Panc1 (cell line): ENCODE measurements at regions of chr19 and their contacts with region 1.

Region 1: DNA sequence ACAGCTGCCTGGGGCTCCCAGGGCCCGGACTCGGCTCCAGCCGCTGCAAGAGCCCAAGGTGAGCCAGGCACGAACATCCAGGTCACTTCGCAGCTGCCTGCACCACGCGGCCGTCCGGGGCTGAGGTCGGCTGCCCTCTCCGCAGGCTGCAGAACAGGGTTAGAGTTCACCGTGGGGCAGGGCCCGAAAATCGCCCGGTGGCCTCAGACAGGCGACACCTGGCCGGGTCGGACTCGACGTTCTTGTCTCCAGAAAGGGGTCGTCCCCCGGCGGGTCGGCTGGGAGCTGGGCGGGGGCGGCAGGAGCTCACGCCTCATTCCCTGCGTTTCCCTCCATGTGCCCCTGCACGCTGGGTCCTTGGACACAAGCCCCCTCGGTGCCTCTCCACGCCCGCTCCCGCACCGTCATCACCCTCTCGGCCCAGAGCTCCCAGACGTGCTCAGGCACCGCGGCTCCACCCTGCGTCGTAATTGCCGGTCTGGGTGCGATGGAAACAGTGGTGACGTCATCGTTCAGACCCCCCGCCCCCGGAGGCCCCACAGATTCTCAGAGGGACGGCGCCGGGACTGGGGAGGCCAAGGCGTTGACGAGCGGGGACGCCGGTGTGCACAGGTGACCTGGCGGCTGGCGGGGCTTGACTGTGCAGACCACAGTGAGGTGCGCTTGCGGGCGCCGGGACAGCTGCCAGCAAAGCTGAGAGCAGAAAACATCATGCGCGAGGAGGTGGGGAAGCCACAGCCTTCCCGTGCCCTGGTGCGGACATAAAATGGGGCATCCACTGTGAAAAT is 4.0 kb upstream of the GRIN3B start:
- DNase-seq: no peak
- ATAC-seq: peak; percentile 27; the same call in 1 of the 2 replicates
- H3K4me3 ChIP-seq: peak overlapping the region in 1 of 2 experiments; percentile 5; a peak in 2 of 4 replicates
- H3K27ac ChIP-seq: no peak overlapping the region
- H3K4me1 ChIP-seq: peaks cover 8% of the 10 kb centered on the region
- H3K27me3 ChIP-seq: no peaks in the 10 kb centered on the region
- CTCF ChIP-seq: no peak

Region 2: GRCh38 chr19:862581-863314 is 133.5 kb before region 1 on chr19:
- CTCF ChIA-PET with region 1: no interaction called
- POLR2A ChIA-PET with region 1: no interaction called
- in situ Hi-C with region 1: no loop called
- intact Hi-C with region 1: loop called (anchors 5 kb)
- DNase-seq: no peak
- ATAC-seq: peak; percentile 15; the same call in 1 of the 2 replicates
- H3K4me3 ChIP-seq: no peak overlapping the region
- H3K27ac ChIP-seq: no peak overlapping the region
- H3K4me1 ChIP-seq: peaks cover 7% of the 10 kb centered on the region
- H3K27me3 ChIP-seq: no peaks in the 10 kb centered on the region
- CTCF ChIP-seq: no peak